A549 (cell line): ENCODE measurements at regions of chr1 and their contacts with region 1.

Region 1: DNA sequence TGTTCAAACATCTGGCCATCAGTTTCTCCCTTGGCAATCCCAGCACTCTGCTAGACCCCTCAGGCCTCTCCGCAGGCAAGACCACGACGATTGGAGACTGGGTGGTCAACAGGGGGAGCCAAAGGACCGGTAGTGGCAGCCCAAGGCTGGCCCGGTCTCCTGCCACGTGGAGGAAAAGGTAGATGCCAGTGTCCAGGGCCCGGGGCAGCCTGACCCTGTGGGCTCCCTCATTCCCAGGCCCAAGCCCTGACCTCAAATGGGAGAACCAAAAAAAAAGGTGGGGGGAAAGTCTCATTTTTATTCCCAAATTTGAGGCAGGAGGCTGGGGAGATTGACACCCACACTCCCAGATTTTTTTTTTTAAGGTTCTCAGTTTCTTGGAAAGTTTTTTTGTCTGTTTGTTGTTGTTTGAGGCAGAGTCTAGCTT is 24.8 kb downstream of the S100A6 start:
- DNase-seq: peak; percentile 84 to 88
- ATAC-seq: peak; percentile 73 to 85
- H3K4me3 ChIP-seq: no peak overlapping the region
- H3K27ac ChIP-seq: peak overlapping the region; percentile 72 to 87
- H3K4me1 ChIP-seq: peaks cover 43% of the 10 kb centered on the region
- CTCF ChIP-seq: peak; percentile 94
- EP300 ChIP-seq: no peak
- POLR2A ChIP-seq: no peak
- RAD21 ChIP-seq: peak; percentile 99 to 100

Region 2: DNA sequence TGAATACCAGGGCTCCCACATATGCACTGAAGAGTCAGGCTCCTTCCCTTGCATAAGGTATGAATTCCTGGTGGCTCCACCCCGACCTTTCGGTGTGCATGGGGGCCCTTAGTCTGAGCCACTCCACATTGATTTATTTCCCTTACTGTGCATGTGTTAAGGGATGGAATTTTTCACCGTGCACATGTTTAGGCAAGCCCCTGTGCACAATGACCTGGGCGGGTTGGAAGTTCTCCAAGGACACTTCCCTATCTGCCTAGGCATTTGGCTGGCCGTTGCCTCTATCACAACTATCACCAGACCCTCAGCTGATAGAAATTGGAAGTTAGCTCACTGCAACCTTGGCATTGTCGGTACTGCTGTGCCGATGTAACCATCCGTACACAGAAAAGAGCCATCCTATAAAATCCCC is 15.1 kb after region 1 on chr1:
- CTCF ChIA-PET with region 1: interaction called, 170 read pairs
- POLR2A ChIA-PET with region 1: no interaction called
- DNase-seq: no peak
- ATAC-seq: peak; percentile 26 to 40; a peak in 3 of 6 replicates
- H3K4me3 ChIP-seq: no peak overlapping the region
- H3K27ac ChIP-seq: peak overlapping the region in 1 of 2 experiments; percentile 34; a peak in 3 of 6 replicates
- H3K4me1 ChIP-seq: no peaks in the 10 kb centered on the region
- CTCF ChIP-seq: no peak
- EP300 ChIP-seq: no peak
- POLR2A ChIP-seq: no peak
- RAD21 ChIP-seq: no peak

Region 3: DNA sequence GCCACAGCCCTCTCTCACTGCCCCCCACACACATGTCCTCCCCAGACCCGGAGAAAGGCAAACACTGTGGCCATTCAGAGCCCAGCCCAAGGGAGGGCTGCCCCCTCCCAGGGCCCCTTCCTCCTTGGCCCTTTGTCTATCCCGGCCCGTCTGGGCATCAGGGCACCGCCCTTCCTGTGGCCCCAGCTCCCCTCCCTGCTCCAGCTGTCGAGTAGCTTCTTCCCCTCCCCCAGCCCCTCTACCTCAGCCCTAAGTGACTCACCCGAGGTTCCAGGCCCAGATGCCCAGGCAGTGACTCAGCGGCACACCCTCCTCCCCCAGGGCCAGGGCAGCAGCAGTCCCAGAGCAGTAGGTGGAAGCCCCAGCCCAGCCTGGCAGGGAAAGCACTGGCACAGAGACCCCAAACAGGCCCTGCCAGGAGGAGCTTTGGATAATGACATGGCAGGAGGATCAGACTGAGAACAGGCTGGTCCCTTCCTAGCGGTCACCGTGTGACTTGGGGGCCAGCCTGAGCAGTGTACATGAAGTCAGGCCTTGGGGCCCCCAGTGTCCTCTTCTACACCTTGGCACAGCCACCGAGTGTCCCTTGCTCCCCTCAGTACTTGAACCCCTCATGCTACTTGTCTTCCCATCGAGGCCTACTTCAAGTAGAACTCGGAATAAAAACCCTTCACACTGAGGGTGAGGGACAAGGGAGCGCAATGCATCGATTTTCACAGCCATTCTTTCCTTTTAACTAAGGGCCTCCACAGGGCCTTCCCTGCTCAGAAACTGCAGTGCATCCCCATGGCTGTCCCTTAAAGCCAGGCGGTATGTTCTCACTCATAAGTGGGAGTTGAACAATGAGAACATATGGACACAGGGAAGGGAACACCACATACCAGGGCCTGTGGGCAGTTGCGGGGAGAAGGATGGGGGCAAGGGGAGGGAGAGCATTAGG is 55.7 kb after region 1 on chr1:
- CTCF ChIA-PET with region 1: interaction called, 273 read pairs
- POLR2A ChIA-PET with region 1: interaction called, 3 read pairs
- DNase-seq: peak; percentile 99
- ATAC-seq: peak; percentile 82 to 89
- H3K4me3 ChIP-seq: peak overlapping the region; percentile 15; the same call in 1 of the 3 replicates
- H3K27ac ChIP-seq: peak overlapping the region; percentile 97 to 100
- H3K4me1 ChIP-seq: peaks cover 57% of the 10 kb centered on the region
- CTCF ChIP-seq: no peak
- EP300 ChIP-seq: peak; percentile 75 to 85; a peak in 3 of 5 replicates
- POLR2A ChIP-seq: no peak
- RAD21 ChIP-seq: peak; percentile 30 to 58; a peak in 4 of 5 replicates

Region 4: GRCh38 chr1:153617675-153618074 is 106.7 kb after region 1 on chr1:
- CTCF ChIA-PET with region 1: interaction called, 15 read pairs
- POLR2A ChIA-PET with region 1: no interaction called
- DNase-seq: no peak
- ATAC-seq: no peak
- H3K4me3 ChIP-seq: no peak overlapping the region
- H3K27ac ChIP-seq: no peak overlapping the region
- H3K4me1 ChIP-seq: peaks cover 27% of the 10 kb centered on the region
- CTCF ChIP-seq: no peak
- EP300 ChIP-seq: no peak
- POLR2A ChIP-seq: no peak
- RAD21 ChIP-seq: no peak

Region 5: GRCh38 chr1:153649863-153650235 is 138.9 kb after region 1 on chr1:
- CTCF ChIA-PET with region 1: interaction called, 16 read pairs
- POLR2A ChIA-PET with region 1: no interaction called
- DNase-seq: no peak
- ATAC-seq: peak; percentile 47 to 53
- H3K4me3 ChIP-seq: no peak overlapping the region
- H3K27ac ChIP-seq: no peak overlapping the region
- H3K4me1 ChIP-seq: peaks cover 6% of the 10 kb centered on the region; the same call in 1 of the 3 replicates
- CTCF ChIP-seq: no peak
- EP300 ChIP-seq: no peak
- POLR2A ChIP-seq: no peak
- RAD21 ChIP-seq: no peak

Region 6: DNA sequence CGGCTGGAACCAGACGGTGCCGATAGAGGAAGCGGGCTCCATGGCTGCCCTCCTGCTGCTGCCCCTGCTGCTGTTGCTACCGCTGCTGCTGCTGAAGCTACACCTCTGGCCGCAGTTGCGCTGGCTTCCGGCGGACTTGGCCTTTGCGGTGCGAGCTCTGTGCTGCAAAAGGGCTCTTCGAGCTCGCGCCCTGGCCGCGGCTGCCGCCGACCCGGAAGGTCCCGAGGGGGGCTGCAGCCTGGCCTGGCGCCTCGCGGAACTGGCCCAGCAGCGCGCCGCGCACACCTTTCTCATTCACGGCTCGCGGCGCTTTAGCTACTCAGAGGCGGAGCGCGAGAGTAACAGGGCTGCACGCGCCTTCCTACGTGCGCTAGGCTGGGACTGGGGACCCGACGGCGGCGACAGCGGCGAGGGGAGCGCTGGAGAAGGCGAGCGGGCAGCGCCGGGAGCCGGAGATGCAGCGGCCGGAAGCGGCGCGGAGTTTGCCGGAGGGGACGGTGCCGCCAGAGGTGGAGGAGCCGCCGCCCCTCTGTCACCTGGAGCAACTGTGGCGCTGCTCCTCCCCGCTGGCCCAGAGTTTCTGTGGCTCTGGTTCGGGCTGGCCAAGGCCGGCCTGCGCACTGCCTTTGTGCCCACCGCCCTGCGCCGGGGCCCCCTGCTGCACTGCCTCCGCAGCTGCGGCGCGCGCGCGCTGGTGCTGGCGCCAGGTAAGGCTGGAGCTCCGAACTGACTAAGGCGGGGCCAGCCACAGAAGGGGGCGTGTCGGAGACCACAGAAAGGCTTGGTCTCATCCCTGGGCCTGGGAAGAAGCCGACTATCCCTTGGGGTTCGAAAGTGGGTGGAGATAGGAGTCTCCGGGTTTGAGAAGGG is 264.7 kb after region 1 on chr1:
- CTCF ChIA-PET with region 1: interaction called, 11 read pairs
- POLR2A ChIA-PET with region 1: no interaction called
- DNase-seq: peak; percentile 26 to 39
- ATAC-seq: peak; percentile 51 to 77; a peak in 5 of 6 replicates
- H3K4me3 ChIP-seq: peak overlapping the region; percentile 52
- H3K27ac ChIP-seq: peak overlapping the region; percentile 13 to 71; a peak in 3 of 6 replicates
- H3K4me1 ChIP-seq: peaks cover 5% of the 10 kb centered on the region; the same call in 1 of the 3 replicates
- CTCF ChIP-seq: no peak
- EP300 ChIP-seq: no peak
- POLR2A ChIP-seq: no peak
- RAD21 ChIP-seq: no peak